ENCODE measurements at regions of chr6 and their contacts with region 1.

Region 1: GRCh38 chr6:105363100-105363754 is 39.7 kb downstream of the PREP start:
- DNase-seq: peak; percentile 81
- H3K4me3 ChIP-seq: no peak overlapping the region
- H3K27ac ChIP-seq: no peak overlapping the region
- H3K4me1 ChIP-seq: peaks cover 17% of the 10 kb centered on the region
- H3K27me3 ChIP-seq: no peaks in the 10 kb centered on the region

Region 2: DNA sequence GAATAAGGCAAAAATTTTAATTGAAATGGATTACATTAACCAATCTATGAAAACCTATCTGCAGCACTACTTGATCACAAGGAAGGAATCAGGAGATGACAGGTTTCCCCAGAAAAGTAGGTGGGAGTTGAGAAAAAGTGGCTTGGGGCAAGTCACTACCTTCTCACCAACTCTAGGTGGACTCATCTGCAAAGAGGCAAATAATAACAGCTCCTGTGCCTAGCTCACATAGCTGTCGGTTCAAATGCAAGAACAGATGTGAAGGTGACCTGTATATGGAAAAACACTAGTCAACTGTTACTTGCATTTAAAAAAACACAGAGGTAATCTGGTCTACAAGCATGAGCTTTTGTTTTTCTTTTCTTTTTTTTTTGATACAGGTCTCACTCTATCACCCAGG is 250.7 kb before region 1 on chr6:
- in situ Hi-C with region 1: loop called (anchors 25 kb)
- DNase-seq: peak; percentile 14
- H3K4me3 ChIP-seq: no peak overlapping the region
- H3K27ac ChIP-seq: no peak overlapping the region
- H3K4me1 ChIP-seq: no peaks in the 10 kb centered on the region
- H3K27me3 ChIP-seq: no peaks in the 10 kb centered on the region

Measured in GM23248 (cell line).